ENCODE measurements at regions of chr4 and their contacts with region 1.

Region 1: GRCh38 chr4:165112368-165113139 is at the start of gene TMEM192:
- DNase-seq: peak; percentile 95
- ATAC-seq: peak; percentile 97
- H3K4me3 Mint-ChIP-seq: peak within 1 kb of the TSS; percentile 94
- H3K27ac Mint-ChIP-seq: peak within 1 kb of the TSS; percentile 88
- H3K4me1 Mint-ChIP-seq: peaks cover 17% of the 10 kb centered on the region
- H3K27me3 Mint-ChIP-seq: no peaks in the 10 kb centered on the region
- total RNA-seq, gene TMEM192: 8.8 TPM

Region 2: DNA sequence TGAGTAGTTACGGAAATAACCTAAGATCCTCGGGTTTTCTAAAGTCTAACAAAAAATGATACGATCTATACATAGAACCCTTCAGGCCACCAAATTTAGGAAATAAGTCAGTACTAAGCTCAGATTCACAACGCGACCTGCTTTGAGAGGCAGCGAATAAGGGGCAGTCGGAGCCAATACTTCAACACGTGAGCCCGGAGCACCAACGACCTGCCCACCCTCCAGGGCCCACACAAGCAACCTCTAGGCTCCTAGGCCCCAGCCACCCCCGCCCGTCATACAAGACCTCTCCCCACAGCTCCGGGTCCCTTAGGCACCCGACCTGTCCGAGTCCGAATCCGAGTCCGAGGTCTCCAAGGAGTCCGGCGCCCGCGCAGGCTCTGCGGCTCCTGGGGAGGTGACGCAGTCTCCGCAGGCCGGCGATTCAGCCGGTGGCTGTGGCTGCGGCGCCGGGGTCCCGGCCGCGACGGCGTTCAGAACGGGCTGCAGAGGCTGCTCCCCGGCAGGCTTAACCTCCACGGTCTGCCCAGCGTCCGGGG is 1946.4 kb before region 1 on chr4:
- CTCF ChIA-PET with region 1: no interaction called
- POLR2A ChIA-PET with region 1: no interaction called
- intact Hi-C with region 1: loop called in 1 of 2 experiments (anchors 5 kb)
- DNase-seq: peak; percentile 73
- ATAC-seq: peak; percentile 65
- H3K4me3 Mint-ChIP-seq: peak overlapping the region; percentile 81
- H3K27ac Mint-ChIP-seq: peak overlapping the region; percentile 89
- H3K4me1 Mint-ChIP-seq: peaks cover 44% of the 10 kb centered on the region
- H3K27me3 Mint-ChIP-seq: no peaks in the 10 kb centered on the region

Region 3: GRCh38 chr4:163494360-163495162 is 1618.0 kb before region 1 on chr4 and contains the start of gene TMA16:
- CTCF ChIA-PET with region 1: interaction called, 4 read pairs
- POLR2A ChIA-PET with region 1: no interaction called
- intact Hi-C with region 1: loop called in 1 of 2 experiments (anchors 10 kb)
- DNase-seq: peak; percentile 92
- ATAC-seq: peak; percentile 91
- H3K4me3 Mint-ChIP-seq: peak within 1 kb of the TSS; percentile 99
- H3K27ac Mint-ChIP-seq: peak within 1 kb of the TSS; percentile 100
- H3K4me1 Mint-ChIP-seq: peaks cover 27% of the 10 kb centered on the region
- H3K27me3 Mint-ChIP-seq: no peaks in the 10 kb centered on the region
- total RNA-seq, gene TMA16: 54.7 to 63.6 TPM

Region 4: DNA sequence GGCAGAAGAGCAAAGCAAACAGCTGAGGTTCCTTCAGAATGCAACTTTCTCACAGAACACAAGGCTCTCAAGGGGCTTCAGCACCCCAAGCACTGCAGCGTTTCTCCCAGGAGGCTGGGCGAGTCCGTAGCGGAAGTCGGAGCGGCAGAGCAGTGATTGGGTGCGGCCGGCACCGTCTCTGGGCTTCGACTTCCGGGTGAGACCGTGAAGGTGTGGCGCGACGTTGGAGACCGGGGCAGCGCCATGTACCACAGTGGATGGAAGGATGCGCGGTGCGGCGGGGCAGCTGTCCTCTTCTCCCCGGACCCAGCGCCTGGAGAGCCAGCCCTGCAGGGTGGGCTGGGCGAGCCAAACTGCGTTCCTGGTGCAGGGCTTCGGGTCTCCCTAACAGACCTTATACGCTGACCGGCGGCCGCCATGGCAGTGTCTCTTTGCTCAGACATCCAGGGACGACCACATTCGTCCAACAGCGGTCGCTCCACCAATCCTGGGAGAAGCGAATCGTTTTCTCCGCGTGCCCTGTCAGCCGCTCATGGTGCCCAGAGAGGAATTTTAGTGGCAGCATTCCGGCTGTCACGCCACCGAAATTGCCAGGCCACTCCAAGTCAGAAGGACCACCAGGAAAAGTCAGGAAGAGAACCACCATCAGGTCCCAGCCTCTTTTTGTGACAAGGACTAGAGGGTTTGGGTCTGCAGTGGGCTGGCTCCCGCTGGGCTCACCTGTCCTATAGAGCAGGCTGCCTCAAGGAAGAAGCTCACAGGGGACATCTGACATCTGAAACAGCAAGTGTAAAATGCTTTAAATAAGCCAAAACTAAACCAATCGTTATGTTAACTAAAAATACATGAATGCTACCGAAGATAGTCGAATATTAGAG is 155.5 kb before region 1 on chr4:
- CTCF ChIA-PET with region 1: no interaction called
- POLR2A ChIA-PET with region 1: no interaction called
- intact Hi-C with region 1: loop called in 1 of 2 experiments (anchors 1 kb)
- DNase-seq: peak; percentile 86
- ATAC-seq: peak; percentile 100
- H3K4me3 Mint-ChIP-seq: peak overlapping the region; percentile 78
- H3K27ac Mint-ChIP-seq: peak overlapping the region; percentile 70
- H3K4me1 Mint-ChIP-seq: peaks cover 8% of the 10 kb centered on the region
- H3K27me3 Mint-ChIP-seq: peaks cover 2% of the 10 kb centered on the region

Region 5: GRCh38 chr4:165207431-165208220 is 95.1 kb after region 1 on chr4 and contains the start of gene KLHL2:
- CTCF ChIA-PET with region 1: interaction called, 4 read pairs
- POLR2A ChIA-PET with region 1: no interaction called
- intact Hi-C with region 1: loop called (anchors 1 to 2 kb)
- DNase-seq: peak; percentile 82
- ATAC-seq: peak; percentile 65
- H3K4me3 Mint-ChIP-seq: peak within 1 kb of the TSS; percentile 86
- H3K27ac Mint-ChIP-seq: peak within 1 kb of the TSS; percentile 89
- H3K4me1 Mint-ChIP-seq: peaks cover 68% of the 10 kb centered on the region
- H3K27me3 Mint-ChIP-seq: no peaks in the 10 kb centered on the region
- total RNA-seq, gene KLHL2: 20.9 to 22.1 TPM

Region 6: DNA sequence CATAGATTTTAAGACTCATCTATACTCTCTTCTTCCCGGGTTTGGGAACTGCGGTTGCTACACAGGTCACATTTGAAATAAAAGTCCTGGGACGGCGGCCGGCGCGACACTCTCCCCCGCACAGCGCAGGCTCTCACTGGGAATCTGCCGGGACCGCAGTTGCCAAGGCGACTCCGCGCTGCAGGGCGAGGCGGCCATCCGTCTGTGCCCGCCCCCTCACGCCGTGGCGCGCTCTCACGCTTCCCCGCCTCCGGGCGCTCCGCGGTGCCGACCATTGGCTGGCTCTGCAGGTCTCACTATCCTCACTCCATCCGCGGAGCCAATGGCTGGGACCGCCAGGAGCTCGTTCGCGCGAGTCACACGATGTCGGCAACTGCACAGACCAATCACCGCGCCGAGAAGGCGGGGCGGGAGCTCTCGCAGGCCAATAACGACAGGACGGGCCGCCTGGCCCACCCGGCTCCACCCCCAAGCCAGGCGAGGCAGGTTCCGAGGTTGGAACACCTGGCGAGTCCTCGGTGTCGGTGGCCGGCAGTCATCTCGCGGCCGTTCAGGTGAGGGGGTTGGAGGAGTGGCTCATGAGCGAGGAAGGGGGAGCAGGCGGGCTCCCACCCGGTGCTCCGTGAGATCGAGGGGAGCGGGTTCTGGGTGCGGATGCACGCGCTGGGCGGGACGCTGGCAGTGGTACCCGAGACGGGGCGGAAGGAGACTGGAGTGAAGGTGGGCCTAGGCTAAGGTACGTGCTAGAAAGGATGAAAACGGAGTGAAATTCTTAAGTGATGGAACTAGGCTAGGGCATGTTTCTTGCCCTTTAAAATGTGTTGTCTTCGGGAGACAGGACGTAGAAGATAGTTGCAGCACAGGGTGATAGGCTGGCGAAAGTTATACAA is 214.9 kb after region 1 on chr4 and contains the start of gene MSMO1:
- CTCF ChIA-PET with region 1: interaction called, 5 read pairs
- POLR2A ChIA-PET with region 1: interaction called, 5 read pairs
- intact Hi-C with region 1: loop called (anchors 1 kb)
- DNase-seq: peak; percentile 99
- ATAC-seq: peak; percentile 98
- H3K4me3 Mint-ChIP-seq: no peak within 1 kb of the TSS
- H3K27ac Mint-ChIP-seq: no peak within 1 kb of the TSS
- H3K4me1 Mint-ChIP-seq: peaks cover 41% of the 10 kb centered on the region
- H3K27me3 Mint-ChIP-seq: no peaks in the 10 kb centered on the region
- total RNA-seq, gene MSMO1: 48.4 to 50.7 TPM

Region 7: DNA sequence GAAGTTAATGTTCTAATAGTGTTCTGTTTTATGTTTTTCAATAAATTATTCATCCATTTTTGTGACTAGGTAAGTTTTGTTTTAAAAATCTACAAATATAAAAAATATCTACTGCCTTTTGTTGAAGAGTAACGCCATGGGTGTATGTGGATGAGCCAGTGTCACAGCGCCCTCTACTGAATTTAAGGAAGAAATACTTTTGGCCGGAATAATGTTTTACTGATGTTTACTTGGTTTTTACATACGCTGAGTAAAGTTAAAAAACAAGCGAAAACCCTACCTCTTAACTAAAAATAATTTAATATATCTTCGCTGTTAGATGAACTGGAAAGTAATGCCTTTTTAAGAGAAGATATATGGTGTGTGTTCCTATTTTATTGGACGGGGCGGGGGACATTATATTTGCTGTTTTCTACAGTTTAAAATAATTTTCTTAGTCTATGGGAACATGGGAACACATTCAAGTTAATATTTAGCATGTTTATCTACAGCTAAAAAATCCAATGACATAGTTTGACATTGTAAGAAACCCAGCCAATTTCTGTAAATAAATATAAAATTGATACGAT is 352.3 kb after region 1 on chr4:
- CTCF ChIA-PET with region 1: interaction called, 4 read pairs
- POLR2A ChIA-PET with region 1: no interaction called
- intact Hi-C with region 1: loop called in 1 of 2 experiments (anchors 5 kb)
- DNase-seq: peak; percentile 39
- ATAC-seq: peak; percentile 68
- H3K4me3 Mint-ChIP-seq: no peak overlapping the region
- H3K27ac Mint-ChIP-seq: no peak overlapping the region
- H3K4me1 Mint-ChIP-seq: no peaks in the 10 kb centered on the region
- H3K27me3 Mint-ChIP-seq: no peaks in the 10 kb centered on the region

Measured in activated CD4-positive, alpha-beta T cell treated with anti-CD3 and anti-CD28 coated beads for 36 hours (primary cell).